CD8-positive, alpha-beta T cell (primary cell): ENCODE measurements at regions of chr14 and their contacts with region 1.

Region 1: DNA sequence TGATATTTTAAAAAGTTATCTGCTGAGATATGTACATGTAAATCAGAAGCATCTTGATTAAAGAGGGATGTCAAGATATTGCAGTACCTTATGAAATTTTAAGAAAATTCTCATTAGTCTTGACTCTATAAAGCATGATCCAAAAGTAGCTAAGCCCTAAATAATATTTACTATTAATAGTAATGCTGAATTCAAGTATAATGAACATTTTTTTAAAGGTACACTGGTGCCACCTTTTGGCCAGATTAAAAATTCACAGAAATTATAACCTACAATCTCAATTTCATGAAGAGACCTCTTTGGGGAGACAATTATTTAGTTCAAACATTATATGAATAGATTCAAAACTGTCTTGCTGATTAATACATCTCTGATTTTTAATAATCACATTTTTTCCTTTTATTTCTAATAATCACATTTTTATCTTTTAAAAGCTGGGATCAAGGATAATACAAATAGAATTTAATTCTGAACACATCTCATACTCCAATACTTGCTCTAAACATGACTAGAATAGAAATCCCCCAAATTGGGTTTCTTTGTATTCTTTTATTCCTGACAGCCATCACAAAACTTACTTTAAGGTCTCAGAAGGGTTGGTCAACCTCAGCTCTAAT is 13.4 kb downstream of the AKAP5 start:
- DNase-seq: peak in 3 of 9 experiments; percentile 11 to 62 (median 55)
- ATAC-seq: no peak
- H3K4me3 ChIP-seq: no peak overlapping the region
- H3K4me3 Mint-ChIP-seq: no peak overlapping the region
- H3K27ac ChIP-seq: no peak overlapping the region
- H3K27ac Mint-ChIP-seq: no peak overlapping the region
- H3K4me1 ChIP-seq: no peaks in the 10 kb centered on the region
- H3K4me1 Mint-ChIP-seq: peaks cover 13% of the 10 kb centered on the region
- H3K27me3 ChIP-seq: no peaks in the 10 kb centered on the region
- H3K27me3 Mint-ChIP-seq: no peaks in the 10 kb centered on the region
- CTCF ChIP-seq: peak; percentile 72

Region 2: DNA sequence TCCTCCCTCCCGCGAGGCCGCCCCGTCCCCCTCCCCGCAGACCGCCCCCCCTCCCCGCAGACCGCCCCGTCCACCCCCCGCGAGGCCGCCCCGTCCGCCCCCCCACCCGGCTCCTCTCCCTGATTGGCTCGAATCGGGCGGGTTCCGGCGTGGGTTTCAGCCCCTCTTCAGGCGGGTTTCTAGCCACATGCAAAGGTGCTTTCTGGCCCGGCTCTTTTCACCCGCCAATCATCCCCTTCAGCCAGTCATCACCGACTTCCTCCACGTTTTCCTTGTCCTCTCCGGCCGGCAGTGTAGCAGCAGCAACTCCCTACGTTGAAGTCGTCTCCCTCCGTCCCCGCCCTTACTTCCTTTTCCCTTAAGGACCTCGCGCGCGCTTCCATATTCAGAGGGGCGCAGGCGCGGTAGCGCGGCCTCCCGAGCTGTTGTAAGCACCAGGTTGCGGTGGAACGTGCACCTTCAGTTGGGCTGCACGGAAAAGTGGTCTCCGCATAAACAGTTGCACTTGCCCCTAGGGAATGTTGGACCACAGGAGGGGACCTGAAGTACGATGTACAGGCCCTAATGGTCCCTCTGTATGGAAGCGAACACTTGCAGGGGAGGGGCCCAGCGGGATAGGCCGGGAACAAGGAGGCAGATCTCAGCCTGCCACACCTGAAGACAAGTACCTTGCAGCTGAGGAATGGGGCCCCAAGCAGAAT is 140.0 kb before region 1 on chr14:
- CTCF ChIA-PET with region 1: interaction called, 45 read pairs
- POLR2A ChIA-PET with region 1: interaction called, 5 read pairs
- intact Hi-C with region 1: no loop called
- DNase-seq: peak; percentile 54 to 93 (median 85)
- ATAC-seq: peak; percentile 79
- H3K4me3 ChIP-seq: peak overlapping the region; percentile 67 to 87
- H3K4me3 Mint-ChIP-seq: peak overlapping the region; percentile 97
- H3K27ac ChIP-seq: peak overlapping the region; percentile 38 to 58
- H3K27ac Mint-ChIP-seq: peak overlapping the region; percentile 96
- H3K4me1 ChIP-seq: peaks cover 19% of the 10 kb centered on the region
- H3K4me1 Mint-ChIP-seq: peaks cover 26% of the 10 kb centered on the region
- H3K27me3 ChIP-seq: no peaks in the 10 kb centered on the region
- H3K27me3 Mint-ChIP-seq: no peaks in the 10 kb centered on the region
- CTCF ChIP-seq: no peak

Region 3: GRCh38 chr14:64423987-64424386 is 54.8 kb before region 1 on chr14:
- CTCF ChIA-PET with region 1: interaction called, 79 read pairs
- POLR2A ChIA-PET with region 1: no interaction called
- intact Hi-C with region 1: no loop called
- DNase-seq: no peak
- ATAC-seq: no peak
- H3K4me3 ChIP-seq: no peak overlapping the region
- H3K4me3 Mint-ChIP-seq: no peak overlapping the region
- H3K27ac ChIP-seq: no peak overlapping the region
- H3K27ac Mint-ChIP-seq: no peak overlapping the region
- H3K4me1 ChIP-seq: no peaks in the 10 kb centered on the region
- H3K4me1 Mint-ChIP-seq: no peaks in the 10 kb centered on the region
- H3K27me3 ChIP-seq: no peaks in the 10 kb centered on the region
- H3K27me3 Mint-ChIP-seq: no peaks in the 10 kb centered on the region
- CTCF ChIP-seq: no peak

Region 4: DNA sequence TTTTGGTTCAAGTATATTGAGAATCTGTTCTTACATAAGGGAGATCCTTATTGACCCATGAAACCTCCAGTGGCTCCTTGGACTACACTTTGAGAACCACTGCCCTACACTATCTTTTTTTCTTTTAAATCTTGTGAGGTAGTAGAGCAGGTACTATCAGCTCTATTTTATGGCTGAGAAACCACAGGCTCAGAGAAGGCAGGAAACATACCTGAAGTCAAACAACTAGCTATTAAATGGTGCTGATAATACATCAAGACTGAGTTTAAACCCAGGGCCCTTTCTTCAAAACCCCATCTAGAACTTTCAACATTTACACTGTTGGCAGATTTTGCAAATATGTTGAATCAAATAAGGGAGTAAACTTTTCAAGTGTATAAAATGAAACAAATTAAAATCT is 18.0 kb after region 1 on chr14:
- CTCF ChIA-PET with region 1: interaction called, 11 read pairs
- POLR2A ChIA-PET with region 1: interaction called, 4 read pairs
- intact Hi-C with region 1: no loop called
- DNase-seq: no peak
- ATAC-seq: no peak
- H3K4me3 ChIP-seq: no peak overlapping the region
- H3K4me3 Mint-ChIP-seq: peak overlapping the region; percentile 52
- H3K27ac ChIP-seq: peak overlapping the region in 1 of 2 experiments; percentile 7
- H3K27ac Mint-ChIP-seq: peak overlapping the region; percentile 88
- H3K4me1 ChIP-seq: peaks cover 71% of the 10 kb centered on the region
- H3K4me1 Mint-ChIP-seq: peaks cover 76% of the 10 kb centered on the region
- H3K27me3 ChIP-seq: no peaks in the 10 kb centered on the region
- H3K27me3 Mint-ChIP-seq: no peaks in the 10 kb centered on the region
- CTCF ChIP-seq: no peak

Region 5: DNA sequence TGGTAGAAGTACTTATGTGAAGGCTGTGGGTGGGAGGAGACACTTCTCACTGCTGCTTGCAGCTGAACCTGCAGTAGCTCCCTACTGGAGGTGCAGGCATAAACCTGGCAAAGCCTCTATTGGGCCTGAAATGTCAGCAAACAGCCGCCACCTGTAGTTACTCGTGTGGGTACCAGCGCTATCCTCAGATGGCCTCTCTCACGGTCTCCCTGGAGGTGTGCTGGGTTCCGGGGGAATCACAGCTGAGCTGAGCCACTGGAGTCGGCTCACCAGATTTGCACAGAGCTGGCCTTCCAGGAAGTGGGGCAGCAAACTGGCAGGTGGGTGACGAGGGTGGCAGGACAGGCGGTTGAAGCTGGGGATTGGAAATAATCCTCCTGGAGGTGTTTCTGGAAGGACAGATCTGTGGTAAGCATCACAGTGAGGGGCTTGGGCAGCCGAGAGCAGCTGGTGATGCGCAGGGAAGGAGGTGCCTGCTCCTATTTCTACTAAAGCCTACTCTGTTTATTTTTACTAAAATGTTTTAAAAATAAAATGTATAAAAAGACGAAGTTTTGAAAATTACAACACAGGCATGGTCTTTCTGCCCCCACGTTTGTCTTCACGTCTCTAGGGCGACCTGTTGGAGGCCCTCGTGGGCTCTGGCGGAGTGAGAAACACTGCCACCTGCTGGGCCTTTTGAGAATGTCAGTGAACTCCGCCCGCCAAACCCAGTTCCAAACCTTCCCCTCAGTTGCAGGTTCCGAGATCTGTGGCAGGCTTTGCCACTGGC is 157.7 kb after region 1 on chr14:
- CTCF ChIA-PET with region 1: interaction called, 7 read pairs
- POLR2A ChIA-PET with region 1: no interaction called
- intact Hi-C with region 1: loop called in 1 of 2 experiments (anchors 1 kb)
- DNase-seq: peak; percentile 45 to 82 (median 73)
- ATAC-seq: peak; percentile 98
- H3K4me3 ChIP-seq: no peak overlapping the region
- H3K4me3 Mint-ChIP-seq: no peak overlapping the region
- H3K27ac ChIP-seq: no peak overlapping the region
- H3K27ac Mint-ChIP-seq: no peak overlapping the region
- H3K4me1 ChIP-seq: no peaks in the 10 kb centered on the region
- H3K4me1 Mint-ChIP-seq: peaks cover 3% of the 10 kb centered on the region
- H3K27me3 ChIP-seq: no peaks in the 10 kb centered on the region
- H3K27me3 Mint-ChIP-seq: peaks cover 4% of the 10 kb centered on the region
- CTCF ChIP-seq: peak; percentile 88

Region 6: DNA sequence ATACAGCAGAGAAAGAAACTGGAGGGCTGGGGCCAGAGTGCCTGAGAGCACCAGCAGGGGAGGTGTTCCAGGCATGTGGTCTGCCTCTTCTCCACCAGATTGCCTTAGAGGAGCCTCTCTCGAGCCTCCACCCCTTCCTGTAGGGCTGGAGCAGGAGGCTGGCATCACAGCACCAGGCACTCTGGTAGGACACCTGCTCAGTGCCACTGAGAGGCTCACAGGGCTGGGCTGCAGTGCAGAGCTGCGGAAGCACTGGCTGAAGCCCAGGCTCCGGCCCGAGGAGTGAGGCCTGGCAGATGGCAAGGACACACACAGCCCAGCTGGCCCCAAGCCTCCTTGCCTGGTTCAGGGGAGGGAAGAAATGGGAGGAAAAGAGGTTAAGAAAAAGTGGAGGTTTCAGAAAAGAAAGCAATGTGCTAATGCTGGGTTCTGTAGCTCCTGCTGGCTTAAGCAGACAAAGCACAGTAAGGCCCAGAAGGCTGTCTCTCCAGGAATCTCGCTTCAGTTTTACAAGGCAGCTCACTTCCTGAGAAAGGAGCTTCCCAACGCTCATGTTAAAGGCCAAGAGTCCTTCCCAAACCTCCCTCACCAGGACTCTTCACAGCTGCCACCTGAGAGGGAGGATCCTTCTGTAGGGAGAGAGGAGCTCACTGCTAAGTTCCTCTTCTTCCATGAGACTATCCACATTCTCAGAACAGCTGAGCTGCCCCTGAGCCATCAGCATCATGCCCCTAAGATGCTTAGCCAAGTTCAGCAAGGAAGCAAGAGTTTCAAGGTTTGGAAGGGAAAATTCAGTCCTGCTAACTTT is 377.2 kb after region 1 on chr14:
- CTCF ChIA-PET with region 1: no interaction called
- POLR2A ChIA-PET with region 1: no interaction called
- intact Hi-C with region 1: no loop called
- DNase-seq: no peak
- ATAC-seq: no peak
- H3K4me3 ChIP-seq: no peak overlapping the region
- H3K4me3 Mint-ChIP-seq: no peak overlapping the region
- H3K27ac ChIP-seq: no peak overlapping the region
- H3K27ac Mint-ChIP-seq: no peak overlapping the region
- H3K4me1 ChIP-seq: no peaks in the 10 kb centered on the region
- H3K4me1 Mint-ChIP-seq: no peaks in the 10 kb centered on the region
- H3K27me3 ChIP-seq: no peaks in the 10 kb centered on the region
- H3K27me3 Mint-ChIP-seq: peaks cover 12% of the 10 kb centered on the region
- CTCF ChIP-seq: no peak